ENCODE measurements at regions of chr12 and their contacts with region 1.

Region 1: GRCh38 chr12:29241821-29242591 is 92.9 kb downstream of the FAR2 start:
- DNase-seq: peak; percentile 84
- H3K4me3 ChIP-seq: peak overlapping the region in 1 of 3 experiments; percentile 15
- H3K27ac ChIP-seq: peak overlapping the region; percentile 94
- H3K4me1 ChIP-seq: peaks cover 68% of the 10 kb centered on the region
- H3K27me3 ChIP-seq: no peaks in the 10 kb centered on the region
- CTCF ChIP-seq: peak in 1 of 2 donors; percentile 8
- POLR2A ChIP-seq: peak; percentile 28

Region 2: DNA sequence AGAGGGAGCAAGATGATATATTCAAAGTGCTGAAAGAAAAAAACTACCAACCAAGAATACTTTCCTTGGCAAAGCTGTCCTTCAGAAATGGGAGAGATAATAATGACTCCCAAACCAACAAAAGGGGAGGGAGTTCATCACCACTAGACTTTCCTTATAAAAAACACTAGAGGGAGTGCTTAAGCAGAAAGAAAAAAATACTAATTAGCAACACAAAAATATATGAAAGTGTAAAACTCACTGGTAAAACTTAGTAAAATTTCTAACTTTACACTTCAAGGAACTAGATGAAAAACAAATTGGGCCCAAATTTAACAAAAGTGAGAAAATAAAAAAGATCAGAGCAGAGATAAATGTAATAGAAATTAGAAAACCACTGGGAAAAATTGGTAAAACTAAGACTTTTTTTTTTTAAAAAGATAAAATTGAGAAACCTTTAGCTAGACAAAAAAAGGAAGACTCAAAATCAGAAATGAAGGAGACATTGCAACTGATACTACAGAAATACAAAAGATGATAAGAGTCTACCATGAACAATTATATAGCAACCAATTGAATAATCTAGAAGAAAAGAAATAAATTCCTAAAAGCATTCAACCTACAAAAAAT is 153.3 kb before region 1 on chr12:
- CTCF ChIA-PET with region 1: interaction called, 14 read pairs
- POLR2A ChIA-PET with region 1: no interaction called
- dilution Hi-C with region 1: no loop called
- intact Hi-C with region 1: loop called (anchors 5 kb)
- DNase-seq: peak; percentile 53
- H3K4me3 ChIP-seq: no peak overlapping the region
- H3K27ac ChIP-seq: no peak overlapping the region
- H3K4me1 ChIP-seq: no peaks in the 10 kb centered on the region
- H3K27me3 ChIP-seq: peaks cover 0 to 5% of the 10 kb centered on the region in 2 experiments
- CTCF ChIP-seq: peak; percentile 31 to 33
- POLR2A ChIP-seq: no peak

Region 3: DNA sequence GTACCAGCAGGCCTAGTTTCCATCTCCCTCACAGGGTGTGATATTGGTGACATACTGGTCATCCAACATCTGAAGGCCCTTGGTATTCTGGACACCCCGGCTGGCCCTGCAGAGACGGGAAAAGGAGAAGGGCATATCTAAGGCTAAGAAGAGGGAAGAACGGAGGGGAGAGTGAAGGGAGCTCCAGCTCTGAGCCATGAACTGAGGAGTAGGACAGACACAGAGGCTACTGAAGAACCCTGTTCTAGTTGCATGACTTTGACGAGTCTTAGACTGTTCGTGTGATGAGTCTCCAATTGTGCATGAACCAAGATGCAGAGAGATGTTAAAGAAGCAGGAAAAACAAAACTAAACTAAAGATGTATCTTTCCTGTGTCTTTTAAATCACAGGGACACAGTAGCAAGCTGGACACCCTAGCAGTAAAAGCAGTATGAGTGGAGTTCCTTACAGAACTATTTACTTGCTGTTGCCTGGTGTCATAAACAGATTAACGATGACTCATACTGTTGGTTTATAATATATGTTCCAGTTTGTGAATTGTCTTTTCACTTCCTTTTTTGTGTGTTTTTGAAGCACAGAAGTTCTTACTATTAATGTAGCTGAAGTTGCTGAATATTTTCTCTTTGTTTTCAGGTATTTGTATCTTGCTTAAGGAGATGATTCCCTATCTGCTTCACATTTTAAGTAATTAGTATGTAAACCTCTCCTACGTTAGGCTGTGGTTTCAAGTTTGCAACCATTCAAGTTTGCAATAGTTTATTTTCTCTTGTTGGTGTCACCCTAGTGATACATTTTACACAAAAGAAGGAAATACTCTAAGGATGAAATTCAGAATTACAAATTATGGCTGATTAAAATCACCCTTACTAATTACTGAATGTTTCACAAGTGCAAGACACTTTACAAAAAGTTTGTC is 77.3 kb before region 1 on chr12:
- CTCF ChIA-PET with region 1: interaction called, 3 read pairs
- POLR2A ChIA-PET with region 1: no interaction called
- dilution Hi-C with region 1: no loop called
- intact Hi-C with region 1: loop called (anchors 2 kb)
- DNase-seq: peak; percentile 85
- H3K4me3 ChIP-seq: no peak overlapping the region
- H3K27ac ChIP-seq: peak overlapping the region; percentile 82
- H3K4me1 ChIP-seq: peaks cover 26% of the 10 kb centered on the region
- H3K27me3 ChIP-seq: no peaks in the 10 kb centered on the region
- CTCF ChIP-seq: no peak
- POLR2A ChIP-seq: no peak

Region 4: GRCh38 chr12:29282031-29282816 is 40.2 kb after region 1 on chr12:
- CTCF ChIA-PET with region 1: no interaction called
- POLR2A ChIA-PET with region 1: no interaction called
- dilution Hi-C with region 1: no loop called
- intact Hi-C with region 1: loop called (anchors 1 kb)
- DNase-seq: peak; percentile 58
- H3K4me3 ChIP-seq: no peak overlapping the region
- H3K27ac ChIP-seq: no peak overlapping the region
- H3K4me1 ChIP-seq: peaks cover 8% of the 10 kb centered on the region
- H3K27me3 ChIP-seq: no peaks in the 10 kb centered on the region
- CTCF ChIP-seq: no peak
- POLR2A ChIP-seq: no peak

Region 5: DNA sequence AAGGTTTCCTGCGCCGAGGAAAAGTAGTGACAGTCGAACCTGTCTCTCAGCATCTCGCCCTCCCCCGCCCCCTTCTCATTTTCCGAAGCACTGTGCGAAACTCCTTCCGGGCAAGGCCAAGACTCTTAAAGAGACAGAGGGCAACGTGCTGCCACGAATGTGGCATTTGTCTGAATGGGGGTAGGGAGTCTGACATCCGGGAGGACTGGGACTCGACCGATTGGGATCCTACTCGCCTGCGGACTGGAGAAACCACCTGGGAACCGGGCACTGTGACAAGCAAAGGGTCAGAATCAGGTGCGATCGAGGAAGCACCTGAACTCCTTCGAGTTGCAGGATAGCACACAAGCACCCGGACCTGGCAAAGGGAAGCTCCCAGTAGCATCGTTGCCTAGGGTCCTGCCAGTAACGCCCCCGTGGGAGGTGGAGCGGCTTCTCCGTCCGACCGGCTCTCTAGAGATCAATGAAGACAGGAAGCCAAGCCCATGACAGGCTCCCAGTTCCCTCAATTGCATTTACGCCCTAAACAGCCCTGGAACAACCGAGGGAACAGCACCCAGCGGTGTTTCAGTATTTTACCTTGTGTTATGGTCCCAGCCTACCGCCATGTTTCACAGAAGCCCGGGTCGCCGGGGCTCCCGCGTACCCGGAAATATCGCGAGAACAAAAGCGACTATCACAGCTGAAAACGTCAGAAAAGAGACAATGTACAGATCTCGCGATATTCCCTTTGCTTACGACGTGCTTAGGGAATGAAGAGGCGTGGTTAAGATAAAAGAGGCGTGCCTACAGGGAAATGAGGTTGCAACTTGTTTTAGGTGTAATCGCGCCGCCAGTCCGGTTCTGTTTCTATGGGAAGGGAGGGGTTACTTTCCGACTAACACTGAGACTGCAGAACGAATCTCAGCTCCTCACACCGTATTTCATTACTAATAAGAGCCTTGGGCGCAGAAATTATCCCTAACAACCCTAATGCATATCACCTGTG is 138.8 kb after region 1 on chr12 and contains the start of gene ERGIC2:
- CTCF ChIA-PET with region 1: no interaction called
- POLR2A ChIA-PET with region 1: no interaction called
- dilution Hi-C with region 1: no loop called
- intact Hi-C with region 1: loop called (anchors 2 kb)
- DNase-seq: peak; percentile 98
- H3K4me3 ChIP-seq: peak within 1 kb of the TSS; percentile 44 to 97 (median 87)
- H3K27ac ChIP-seq: peak within 1 kb of the TSS; percentile 76
- H3K4me1 ChIP-seq: peaks cover 12% of the 10 kb centered on the region
- H3K27me3 ChIP-seq: peaks cover 0 to 4% of the 10 kb centered on the region in 2 experiments
- CTCF ChIP-seq: no peak
- POLR2A ChIP-seq: peak; percentile 65
- total RNA-seq, gene ERGIC2: 57.6 and 60.6 TPM in 2 replicates

Measured in endothelial cell of umbilical vein (primary cell).